ENCODE measurements at regions of chr1 and their contacts with region 1.

Region 1: GRCh38 chr1:10430216-10431069 is at the start of gene CENPS:
- DNase-seq: peak; percentile 91
- ATAC-seq: peak; percentile 83
- H3K4me3 Mint-ChIP-seq: peak within 1 kb of the TSS; percentile 76
- H3K27ac Mint-ChIP-seq: peak within 1 kb of the TSS; percentile 92
- H3K4me1 Mint-ChIP-seq: peaks cover 22% of the 10 kb centered on the region
- H3K27me3 Mint-ChIP-seq: no peaks in the 10 kb centered on the region
- total RNA-seq, gene CENPS: 18.1 to 22.8 TPM

Region 2: GRCh38 chr1:9766759-9767442 is 663.5 kb before region 1 on chr1:
- CTCF ChIA-PET with region 1: no interaction called
- POLR2A ChIA-PET with region 1: no interaction called
- intact Hi-C with region 1: no loop called
- DNase-seq: peak; percentile 10
- ATAC-seq: peak; percentile 49
- H3K4me3 Mint-ChIP-seq: no peak overlapping the region
- H3K27ac Mint-ChIP-seq: no peak overlapping the region
- H3K4me1 Mint-ChIP-seq: peaks cover 11% of the 10 kb centered on the region
- H3K27me3 Mint-ChIP-seq: no peaks in the 10 kb centered on the region

Region 3: GRCh38 chr1:9942939-9943788 is 487.3 kb before region 1 on chr1 and contains the starts of genes LZIC and NMNAT1:
- CTCF ChIA-PET with region 1: interaction called, 5 read pairs
- POLR2A ChIA-PET with region 1: no interaction called
- intact Hi-C with region 1: loop called in 1 of 2 experiments (anchors 1 kb)
- DNase-seq: peak; percentile 95
- ATAC-seq: peak; percentile 97
- H3K4me3 Mint-ChIP-seq: peak within 1 kb of the TSS; percentile 96
- H3K27ac Mint-ChIP-seq: peak within 1 kb of the TSS; percentile 98
- H3K4me1 Mint-ChIP-seq: peaks cover 18% of the 10 kb centered on the region
- H3K27me3 Mint-ChIP-seq: no peaks in the 10 kb centered on the region
- total RNA-seq, gene LZIC: 23.4 to 32.0 TPM
- total RNA-seq, gene NMNAT1: 7.3 to 8.5 TPM

Region 4: DNA sequence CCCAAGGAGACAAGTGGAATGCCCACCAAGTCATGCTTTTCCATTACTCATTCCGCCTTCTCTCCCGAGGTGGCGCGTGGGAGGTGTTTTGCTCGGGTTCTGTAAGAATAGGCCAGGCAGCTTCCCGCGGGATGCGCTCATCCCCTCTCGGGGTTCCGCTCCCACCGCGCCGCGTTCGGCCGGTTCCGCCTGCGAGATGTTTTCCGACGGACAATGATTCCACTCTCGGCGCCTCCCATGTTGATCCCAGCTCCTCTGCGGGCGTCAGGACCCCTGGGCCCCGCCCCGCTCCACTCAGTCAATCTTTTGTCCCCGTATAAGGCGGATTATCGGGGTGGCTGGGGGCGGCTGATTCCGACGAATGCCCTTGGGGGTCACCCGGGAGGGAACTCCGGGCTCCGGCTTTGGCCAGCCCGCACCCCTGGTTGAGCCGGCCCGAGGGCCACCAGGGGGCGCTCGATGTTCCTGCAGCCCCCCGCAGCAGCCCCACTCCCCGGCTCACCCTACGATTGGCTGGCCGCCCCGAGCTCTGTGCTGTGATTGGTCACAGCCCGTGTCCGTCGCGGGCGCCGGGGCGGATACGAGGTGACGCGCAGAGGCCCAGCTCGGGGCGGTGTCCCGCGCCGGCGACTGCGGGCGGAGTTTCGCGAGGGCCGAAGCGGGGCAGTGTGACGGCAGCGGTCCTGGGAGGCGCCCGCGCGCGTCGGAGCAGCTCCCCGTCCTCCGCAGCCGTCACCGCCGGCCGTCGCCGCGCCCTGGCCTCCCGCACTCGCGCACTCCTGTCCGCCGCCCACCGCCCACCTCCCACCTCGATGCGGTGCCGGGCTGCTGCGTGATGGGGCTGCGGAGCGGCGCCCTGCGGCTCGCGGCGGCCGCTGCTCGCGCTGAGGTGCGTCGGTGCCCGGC is 220.3 kb before region 1 on chr1 and contains the start of gene KIF1B:
- CTCF ChIA-PET with region 1: interaction called, 25 read pairs
- POLR2A ChIA-PET with region 1: no interaction called
- intact Hi-C with region 1: loop called (anchors 1 to 2 kb)
- DNase-seq: peak; percentile 97
- ATAC-seq: peak; percentile 98
- H3K4me3 Mint-ChIP-seq: peak within 1 kb of the TSS; percentile 76
- H3K27ac Mint-ChIP-seq: peak within 1 kb of the TSS; percentile 74
- H3K4me1 Mint-ChIP-seq: peaks cover 31% of the 10 kb centered on the region
- H3K27me3 Mint-ChIP-seq: no peaks in the 10 kb centered on the region
- total RNA-seq, gene KIF1B: 12.3 to 13.5 TPM

Region 5: GRCh38 chr1:10398734-10399623 is 31.5 kb before region 1 on chr1 and contains the start of gene PGD:
- CTCF ChIA-PET with region 1: interaction called, 5 read pairs
- POLR2A ChIA-PET with region 1: no interaction called
- intact Hi-C with region 1: loop called (anchors 1 to 2 kb)
- DNase-seq: peak; percentile 99
- ATAC-seq: peak; percentile 97
- H3K4me3 Mint-ChIP-seq: peak within 1 kb of the TSS; percentile 86
- H3K27ac Mint-ChIP-seq: peak within 1 kb of the TSS; percentile 78
- H3K4me1 Mint-ChIP-seq: peaks cover 31% of the 10 kb centered on the region
- H3K27me3 Mint-ChIP-seq: no peaks in the 10 kb centered on the region
- total RNA-seq, gene PGD: 91.6 to 93.7 TPM

Region 6: DNA sequence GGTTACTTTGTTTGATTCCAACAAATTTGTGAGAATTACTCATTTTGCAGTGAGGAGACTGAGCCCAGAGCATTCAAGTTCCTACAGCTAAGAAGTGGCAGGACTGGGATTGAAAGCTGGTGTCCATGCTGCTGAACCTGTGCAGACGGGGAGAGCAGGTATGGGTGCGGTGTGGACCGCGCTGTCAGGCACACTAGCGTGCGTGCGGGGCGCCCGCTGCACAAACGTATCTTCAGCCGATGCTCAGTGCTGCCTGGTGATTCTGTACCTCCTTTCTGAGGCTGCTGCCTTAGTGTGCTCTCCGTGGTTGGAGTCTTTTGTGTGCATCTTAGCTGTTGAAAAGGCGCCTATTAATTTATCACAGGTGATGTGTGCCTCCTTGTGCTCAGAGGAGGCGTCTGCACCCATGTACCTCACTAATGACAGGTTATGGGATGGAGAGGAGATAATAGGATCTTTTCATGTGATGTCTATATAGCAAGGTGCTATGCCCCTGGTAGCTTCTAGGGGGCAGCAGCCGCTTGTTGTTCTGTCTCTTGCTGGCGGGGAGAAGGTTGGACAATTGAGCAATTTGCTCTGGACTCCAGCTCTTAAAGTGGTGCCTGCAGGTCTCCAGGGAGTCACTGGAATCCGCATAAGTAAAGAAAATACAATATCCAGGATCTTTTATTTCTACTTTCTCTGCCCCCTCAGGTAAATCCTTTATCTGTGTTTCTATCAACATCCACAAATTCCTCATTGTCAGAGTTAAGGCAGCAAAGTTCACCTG is 76.9 kb after region 1 on chr1:
- CTCF ChIA-PET with region 1: interaction called, 10 read pairs
- POLR2A ChIA-PET with region 1: no interaction called
- intact Hi-C with region 1: no loop called
- DNase-seq: peak; percentile 73
- ATAC-seq: peak; percentile 47
- H3K4me3 Mint-ChIP-seq: no peak overlapping the region
- H3K27ac Mint-ChIP-seq: no peak overlapping the region
- H3K4me1 Mint-ChIP-seq: peaks cover 51% of the 10 kb centered on the region
- H3K27me3 Mint-ChIP-seq: no peaks in the 10 kb centered on the region

Region 7: DNA sequence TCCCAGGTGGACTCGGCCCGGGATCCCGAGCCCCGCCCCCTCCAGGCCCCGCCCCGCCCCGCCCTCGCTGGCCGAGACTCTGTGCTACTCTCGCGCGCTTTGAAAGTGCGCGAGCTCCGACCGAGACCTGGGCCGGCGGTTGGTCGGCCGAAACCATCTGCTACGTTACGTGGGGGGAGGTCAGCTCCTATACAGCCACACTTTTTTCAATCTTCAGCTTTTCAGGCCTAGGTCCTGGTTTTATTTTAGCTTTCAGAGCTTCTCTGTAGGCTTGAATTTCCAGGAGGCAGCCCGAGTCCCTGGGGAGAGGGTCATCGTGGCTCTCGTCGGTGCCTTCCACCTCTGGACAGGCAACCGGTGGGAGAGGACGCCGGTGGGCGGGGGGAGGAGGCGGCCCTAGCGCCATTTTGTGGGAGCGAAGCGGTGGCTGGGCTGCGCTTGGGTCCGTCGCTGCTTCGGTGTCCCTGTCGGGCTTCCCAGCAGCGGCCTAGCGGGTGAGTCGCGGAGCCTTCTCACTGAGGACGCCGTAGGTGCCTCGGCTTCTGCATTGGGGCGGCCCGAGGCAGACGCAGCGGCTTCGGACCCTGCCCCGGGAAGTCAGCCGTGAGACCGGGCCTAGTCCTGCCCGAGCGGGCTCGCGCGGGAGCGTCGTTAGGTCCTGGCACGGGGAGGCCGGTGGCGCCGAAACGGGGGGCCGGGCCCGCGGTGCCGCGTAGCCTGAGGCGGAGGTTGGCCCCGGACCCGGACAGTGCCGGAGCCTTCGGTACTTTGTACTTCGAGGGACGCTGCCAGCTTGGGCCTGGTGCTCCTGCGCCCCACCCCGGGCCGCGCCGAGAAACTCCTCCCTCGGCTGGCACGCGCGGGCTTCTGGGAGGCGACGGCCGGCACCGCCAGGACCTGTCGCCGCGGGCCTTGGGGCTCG is 582.1 kb after region 1 on chr1 and contains the start of gene TARDBP:
- CTCF ChIA-PET with region 1: no interaction called
- POLR2A ChIA-PET with region 1: no interaction called
- intact Hi-C with region 1: loop called in 1 of 2 experiments (anchors 1 kb)
- DNase-seq: peak; percentile 94
- ATAC-seq: peak; percentile 89
- H3K4me3 Mint-ChIP-seq: peak within 1 kb of the TSS; percentile 93
- H3K27ac Mint-ChIP-seq: peak within 1 kb of the TSS; percentile 99
- H3K4me1 Mint-ChIP-seq: peaks cover 30% of the 10 kb centered on the region
- H3K27me3 Mint-ChIP-seq: no peaks in the 10 kb centered on the region
- total RNA-seq, gene TARDBP: 180 to 190 TPM

Measured in activated CD4-positive, alpha-beta T cell treated with anti-CD3 and anti-CD28 coated beads for 36 hours (primary cell).